ENCODE measurements at regions of chr22 and their contacts with region 1.

Region 1: GRCh38 chr22:49936018-49936952 is 17.9 kb downstream of the CRELD2 start:
- DNase-seq: peak; percentile 95
- H3K4me3 Mint-ChIP-seq: peak overlapping the region; percentile 59
- H3K27ac Mint-ChIP-seq: peak overlapping the region; percentile 79
- H3K4me1 Mint-ChIP-seq: peaks cover 38% of the 10 kb centered on the region
- H3K27me3 Mint-ChIP-seq: no peaks in the 10 kb centered on the region

Region 2: DNA sequence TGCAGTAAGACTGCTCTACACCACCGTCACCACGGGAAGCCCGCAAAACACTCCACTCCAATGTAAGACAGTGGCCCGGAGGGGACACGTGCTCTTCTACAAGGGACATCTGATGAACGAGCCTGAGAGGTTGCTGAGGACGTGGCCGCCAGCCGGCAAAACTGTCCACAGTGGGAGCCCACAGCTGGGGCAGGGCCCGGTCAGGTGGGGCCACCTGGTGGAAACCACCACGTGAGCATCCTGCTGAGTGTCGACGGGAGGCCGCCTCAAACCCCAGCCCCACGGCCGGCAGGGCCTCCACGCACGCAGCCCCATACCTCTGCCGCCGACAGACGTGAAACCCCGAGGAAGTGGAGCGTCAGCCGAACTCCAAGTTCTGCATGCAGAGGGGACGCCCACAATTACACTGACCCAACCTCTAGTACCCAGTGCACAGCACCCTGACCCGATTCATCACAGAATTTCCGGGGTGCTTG is 151.2 kb before region 1 on chr22:
- CTCF ChIA-PET with region 1: no interaction called
- POLR2A ChIA-PET with region 1: no interaction called
- DNase-seq: no peak
- H3K4me3 Mint-ChIP-seq: no peak overlapping the region
- H3K27ac Mint-ChIP-seq: peak overlapping the region; percentile 31
- H3K4me1 Mint-ChIP-seq: peaks cover 54% of the 10 kb centered on the region
- H3K27me3 Mint-ChIP-seq: no peaks in the 10 kb centered on the region

Region 3: GRCh38 chr22:49946612-49947295 is 10.5 kb after region 1 on chr22:
- CTCF ChIA-PET with region 1: no interaction called
- POLR2A ChIA-PET with region 1: interaction called, 15 read pairs
- DNase-seq: no peak
- H3K4me3 Mint-ChIP-seq: no peak overlapping the region
- H3K27ac Mint-ChIP-seq: peak overlapping the region; percentile 88
- H3K4me1 Mint-ChIP-seq: peaks cover 15% of the 10 kb centered on the region
- H3K27me3 Mint-ChIP-seq: no peaks in the 10 kb centered on the region

Region 4: DNA sequence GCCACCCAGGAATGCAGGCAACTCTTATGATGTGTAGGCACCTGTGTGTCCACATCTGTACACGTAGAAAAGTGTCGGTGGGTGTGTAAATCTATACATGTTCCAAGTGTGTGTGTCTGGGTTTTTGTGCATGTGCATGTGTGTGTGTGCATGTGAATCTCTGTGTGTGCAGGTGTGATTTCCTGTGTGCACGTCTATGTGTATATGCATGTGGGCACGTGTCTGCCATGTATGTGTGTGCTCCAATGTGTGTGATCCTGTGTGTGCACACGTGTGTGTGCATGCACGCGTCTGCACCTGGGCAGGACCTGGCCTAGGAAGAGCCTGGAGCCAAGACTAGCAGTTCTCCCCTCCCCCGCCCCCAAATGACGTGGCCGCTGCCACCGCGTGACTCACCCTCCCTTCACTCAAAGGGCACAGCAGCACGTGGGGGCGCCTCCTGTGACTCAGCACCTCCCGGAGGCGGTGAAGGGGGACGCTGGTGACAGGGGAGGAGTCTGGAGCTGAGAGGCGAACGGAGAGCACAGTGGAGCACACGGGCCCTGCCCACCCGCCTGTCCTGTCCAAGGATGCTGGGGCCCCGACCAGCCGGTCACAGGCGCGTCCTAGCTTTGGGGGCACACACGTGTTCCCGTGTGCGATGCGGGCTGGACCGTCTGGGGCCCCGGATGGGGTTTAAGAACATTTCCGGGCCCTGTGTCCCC is 34.4 kb after region 1 on chr22:
- CTCF ChIA-PET with region 1: interaction called, 5 read pairs
- POLR2A ChIA-PET with region 1: interaction called, 14 read pairs
- DNase-seq: peak; percentile 96
- H3K4me3 Mint-ChIP-seq: peak overlapping the region; percentile 79
- H3K27ac Mint-ChIP-seq: peak overlapping the region; percentile 90
- H3K4me1 Mint-ChIP-seq: peaks cover 24% of the 10 kb centered on the region
- H3K27me3 Mint-ChIP-seq: no peaks in the 10 kb centered on the region

Region 5: GRCh38 chr22:50197000-50197800 is 260.9 kb after region 1 on chr22:
- CTCF ChIA-PET with region 1: no interaction called
- POLR2A ChIA-PET with region 1: no interaction called
- DNase-seq: no peak
- H3K4me3 Mint-ChIP-seq: no peak overlapping the region
- H3K27ac Mint-ChIP-seq: no peak overlapping the region
- H3K4me1 Mint-ChIP-seq: peaks cover 23% of the 10 kb centered on the region
- H3K27me3 Mint-ChIP-seq: no peaks in the 10 kb centered on the region